Activated CD4-positive, alpha-beta T cell treated with anti-CD3 and anti-CD28 coated beads for 36 hours (primary cell): ENCODE measurements at regions of chr17 and their contacts with region 1.

Region 1: GRCh38 chr17:10968007-10968406 is 130.1 kb upstream of the PIRT start:
- DNase-seq: no peak
- ATAC-seq: no peak
- H3K4me3 Mint-ChIP-seq: no peak overlapping the region
- H3K27ac Mint-ChIP-seq: no peak overlapping the region
- H3K4me1 Mint-ChIP-seq: no peaks in the 10 kb centered on the region
- H3K27me3 Mint-ChIP-seq: peaks cover 2% of the 10 kb centered on the region

Region 2: DNA sequence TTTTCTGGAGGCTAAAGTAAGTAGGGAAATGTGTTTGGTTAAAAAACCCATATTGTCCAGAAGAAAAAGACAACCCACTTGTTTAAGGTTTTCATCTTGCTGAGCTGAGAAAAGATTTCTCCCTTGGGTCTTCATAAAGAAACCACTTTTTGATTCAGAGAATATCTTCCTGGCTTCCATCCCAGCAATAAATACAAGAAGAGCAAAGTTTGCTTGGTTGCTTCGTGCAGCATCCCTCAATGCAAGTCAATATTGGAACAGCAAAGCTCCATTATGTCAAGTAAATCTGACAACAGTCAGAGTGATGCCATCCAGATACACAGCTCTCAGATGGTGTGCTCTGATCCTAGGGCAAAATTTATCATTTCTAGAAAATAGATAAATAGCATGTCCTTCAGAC is 11.2 kb before region 1 on chr17:
- CTCF ChIA-PET with region 1: no interaction called
- POLR2A ChIA-PET with region 1: no interaction called
- intact Hi-C with region 1: loop called in 1 of 2 experiments (anchors 1 kb)
- DNase-seq: no peak
- ATAC-seq: no peak
- H3K4me3 Mint-ChIP-seq: no peak overlapping the region
- H3K27ac Mint-ChIP-seq: no peak overlapping the region
- H3K4me1 Mint-ChIP-seq: no peaks in the 10 kb centered on the region
- H3K27me3 Mint-ChIP-seq: peaks cover 5% of the 10 kb centered on the region

Region 3: DNA sequence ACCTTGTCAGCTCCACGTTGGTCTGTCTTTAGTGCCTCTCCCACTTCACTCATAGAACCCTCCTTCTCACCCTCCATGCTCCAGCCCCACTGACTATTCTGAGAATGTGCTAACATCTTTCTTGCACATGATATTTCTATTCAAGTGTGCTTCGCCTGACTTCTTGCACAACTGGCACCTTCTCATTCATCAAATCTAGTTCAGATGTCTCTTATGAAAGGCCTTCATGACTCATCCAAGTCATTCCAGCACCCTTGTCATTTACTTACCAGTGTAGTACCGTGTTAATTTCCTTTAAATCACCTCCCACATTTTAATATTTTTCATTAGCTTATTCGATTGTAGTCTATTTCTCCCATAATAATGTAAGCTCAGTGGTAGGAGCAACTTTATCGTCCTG is 67.7 kb after region 1 on chr17:
- CTCF ChIA-PET with region 1: no interaction called
- POLR2A ChIA-PET with region 1: no interaction called
- intact Hi-C with region 1: no loop called
- DNase-seq: no peak
- ATAC-seq: no peak
- H3K4me3 Mint-ChIP-seq: no peak overlapping the region
- H3K27ac Mint-ChIP-seq: no peak overlapping the region
- H3K4me1 Mint-ChIP-seq: no peaks in the 10 kb centered on the region
- H3K27me3 Mint-ChIP-seq: no peaks in the 10 kb centered on the region

Region 4: DNA sequence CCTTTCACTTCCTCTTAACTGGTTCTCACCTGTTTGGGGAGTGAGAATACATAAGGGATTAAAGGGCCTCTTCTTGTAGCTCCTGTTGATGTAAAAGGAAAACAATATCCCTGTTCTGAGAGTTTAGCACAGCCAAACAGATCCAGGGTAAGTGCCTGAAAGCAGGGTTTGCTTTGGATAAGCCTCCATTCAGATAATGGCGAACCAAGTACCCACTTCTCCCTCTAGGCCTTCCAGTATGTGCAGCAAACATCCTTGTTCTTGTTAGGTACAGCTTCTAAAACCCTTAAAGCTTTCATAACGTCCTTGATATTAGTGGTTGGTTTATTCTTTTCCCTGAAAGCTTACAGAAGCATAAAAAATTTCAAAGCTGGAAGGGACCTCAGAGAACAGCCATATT is 499.6 kb after region 1 on chr17:
- CTCF ChIA-PET with region 1: no interaction called
- POLR2A ChIA-PET with region 1: no interaction called
- intact Hi-C with region 1: no loop called
- DNase-seq: no peak
- ATAC-seq: no peak
- H3K4me3 Mint-ChIP-seq: no peak overlapping the region
- H3K27ac Mint-ChIP-seq: no peak overlapping the region
- H3K4me1 Mint-ChIP-seq: no peaks in the 10 kb centered on the region
- H3K27me3 Mint-ChIP-seq: no peaks in the 10 kb centered on the region